ENCODE measurements at regions of chr19 and their contacts with region 1.

Region 1: DNA sequence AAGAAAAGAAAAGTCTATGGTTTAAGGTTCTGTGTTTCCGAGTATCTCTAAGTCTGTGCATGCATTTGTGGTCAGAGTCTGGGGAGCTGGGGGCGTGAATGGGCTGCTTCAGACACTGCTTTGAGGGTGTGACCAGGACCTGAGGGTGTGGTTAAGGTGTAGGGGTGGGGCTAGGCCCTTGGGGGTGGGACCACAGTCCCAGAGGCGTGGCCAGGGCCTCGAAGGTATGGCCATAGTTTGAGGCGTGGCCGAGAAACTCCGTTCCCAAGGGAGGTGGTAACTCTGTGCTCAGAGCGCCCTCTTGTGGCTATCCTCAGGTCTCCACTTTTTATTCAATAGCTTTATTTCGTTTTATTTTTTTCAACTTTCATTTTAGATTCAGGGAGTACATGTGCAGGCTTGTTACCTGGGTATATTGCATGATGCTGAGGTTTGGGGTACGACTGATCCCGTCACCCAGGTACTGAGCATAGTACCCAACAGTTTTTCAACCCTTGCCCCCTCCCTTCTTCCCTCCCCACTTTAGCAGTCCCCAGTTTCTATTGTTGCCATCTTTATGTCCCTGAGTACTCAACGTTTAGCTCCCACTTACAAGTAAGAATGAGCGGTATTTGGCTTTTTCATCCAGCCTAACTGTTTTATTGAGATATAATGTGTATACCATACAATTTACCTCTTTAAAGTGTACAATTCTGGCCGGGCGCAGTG is 7.0 kb upstream of the CBLC start:
- DNase-seq: peak; percentile 88 to 91
- ATAC-seq: peak; percentile 94 to 99 (median 97)
- H3K4me3 ChIP-seq: peak overlapping the region in 1 of 10 donors; percentile 10
- H3K27ac ChIP-seq: peak overlapping the region in 1 of 10 donors; percentile 72
- H3K4me1 ChIP-seq: peaks cover 0 to 41% (median 0%) of the 10 kb centered on the region in 9 donors
- H3K27me3 ChIP-seq: peaks cover 0 to 7% (median 0%) of the 10 kb centered on the region in 7 donors
- CTCF ChIP-seq: peak; percentile 82 to 95 (median 88)

Region 2: DNA sequence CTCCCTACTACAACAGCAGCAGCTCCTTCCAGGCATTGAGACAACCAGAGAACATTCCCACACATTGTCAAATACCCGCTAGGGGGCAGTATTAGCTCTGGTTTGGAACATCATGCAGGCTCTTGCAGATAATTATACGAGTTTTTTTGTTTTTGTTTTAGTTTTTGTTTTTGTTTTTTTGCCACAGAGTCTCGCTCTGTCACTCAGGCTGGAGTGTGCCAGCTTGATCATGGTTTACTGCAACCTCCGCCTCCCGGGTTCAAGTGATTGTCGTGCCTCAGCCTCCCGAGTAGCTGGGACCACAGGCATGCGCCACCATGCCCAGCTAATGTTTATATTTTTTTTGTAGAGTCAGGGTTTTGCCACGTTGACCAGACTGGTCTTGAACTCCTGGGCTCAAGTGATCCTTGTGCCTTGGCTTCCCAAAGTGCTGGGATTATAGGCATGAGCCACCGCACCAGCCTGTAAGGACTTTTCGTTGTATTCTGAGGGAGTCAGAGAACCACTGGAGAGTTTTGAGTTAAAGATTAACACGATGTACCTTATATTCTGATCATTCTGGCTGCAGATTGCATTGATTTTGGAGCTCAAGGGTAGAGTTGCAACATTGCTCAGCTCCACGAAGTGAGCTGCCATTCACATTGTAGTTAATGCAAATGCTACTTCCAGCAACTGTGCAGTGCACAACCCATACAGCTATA is 199.6 kb before region 1 on chr19:
- intact Hi-C with region 1: loop called in 5 of 10 experiments (anchors 5 to 10 kb)
- DNase-seq: peak in 1 of 2 donors; percentile 80
- ATAC-seq: peak in 7 of 8 donors; percentile 55 to 84 (median 78)
- H3K4me3 ChIP-seq: no peak overlapping the region
- H3K27ac ChIP-seq: no peak overlapping the region
- H3K4me1 ChIP-seq: peaks cover 0 to 11% (median 0%) of the 10 kb centered on the region in 9 donors
- H3K27me3 ChIP-seq: peaks cover 0 to 23% (median 0%) of the 10 kb centered on the region in 7 donors
- CTCF ChIP-seq: peak; percentile 51 to 86 (median 83)

Region 3: DNA sequence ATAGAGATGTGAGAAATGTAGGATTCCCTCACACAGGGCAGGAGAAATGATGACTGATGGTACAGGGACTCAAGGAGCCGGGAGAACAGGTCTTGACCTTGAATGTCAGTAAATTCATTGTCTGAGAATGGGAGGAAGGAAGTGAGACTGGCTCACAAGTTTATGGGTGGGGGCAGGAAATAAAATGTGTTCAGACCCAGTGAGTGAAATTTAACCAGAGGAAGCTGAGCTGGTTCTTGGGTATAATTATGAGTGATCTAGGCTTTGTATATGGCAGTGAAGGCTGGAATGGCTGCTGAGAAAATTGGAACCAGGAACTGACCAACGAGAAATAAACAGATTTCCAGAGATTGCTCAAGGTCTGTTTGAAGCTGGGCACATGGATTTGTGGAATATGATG is 163.7 kb before region 1 on chr19:
- intact Hi-C with region 1: no loop called
- DNase-seq: peak in 1 of 2 donors; percentile 50
- ATAC-seq: peak; percentile 71 to 87 (median 86)
- H3K4me3 ChIP-seq: no peak overlapping the region
- H3K27ac ChIP-seq: peak overlapping the region; percentile 20 to 84 (median 64)
- H3K4me1 ChIP-seq: peaks cover 0 to 48% (median 26%) of the 10 kb centered on the region in 9 donors
- H3K27me3 ChIP-seq: peaks cover 0 to 2% (median 0%) of the 10 kb centered on the region in 7 donors
- CTCF ChIP-seq: no peak

Region 4: GRCh38 chr19:44723952-44724319 is 46.8 kb before region 1 on chr19:
- intact Hi-C with region 1: loop called (anchors 1 to 2 kb)
- DNase-seq: peak; percentile 83 to 84
- ATAC-seq: peak; percentile 89 to 94 (median 90)
- H3K4me3 ChIP-seq: no peak overlapping the region
- H3K27ac ChIP-seq: peak overlapping the region in 9 of 10 donors; percentile 0 to 60 (median 28)
- H3K4me1 ChIP-seq: peaks cover 12 to 65% (median 48%) of the 10 kb centered on the region in 9 donors
- H3K27me3 ChIP-seq: no peaks in the 10 kb centered on the region
- CTCF ChIP-seq: peak; percentile 94 to 100 (median 99)

Region 5: DNA sequence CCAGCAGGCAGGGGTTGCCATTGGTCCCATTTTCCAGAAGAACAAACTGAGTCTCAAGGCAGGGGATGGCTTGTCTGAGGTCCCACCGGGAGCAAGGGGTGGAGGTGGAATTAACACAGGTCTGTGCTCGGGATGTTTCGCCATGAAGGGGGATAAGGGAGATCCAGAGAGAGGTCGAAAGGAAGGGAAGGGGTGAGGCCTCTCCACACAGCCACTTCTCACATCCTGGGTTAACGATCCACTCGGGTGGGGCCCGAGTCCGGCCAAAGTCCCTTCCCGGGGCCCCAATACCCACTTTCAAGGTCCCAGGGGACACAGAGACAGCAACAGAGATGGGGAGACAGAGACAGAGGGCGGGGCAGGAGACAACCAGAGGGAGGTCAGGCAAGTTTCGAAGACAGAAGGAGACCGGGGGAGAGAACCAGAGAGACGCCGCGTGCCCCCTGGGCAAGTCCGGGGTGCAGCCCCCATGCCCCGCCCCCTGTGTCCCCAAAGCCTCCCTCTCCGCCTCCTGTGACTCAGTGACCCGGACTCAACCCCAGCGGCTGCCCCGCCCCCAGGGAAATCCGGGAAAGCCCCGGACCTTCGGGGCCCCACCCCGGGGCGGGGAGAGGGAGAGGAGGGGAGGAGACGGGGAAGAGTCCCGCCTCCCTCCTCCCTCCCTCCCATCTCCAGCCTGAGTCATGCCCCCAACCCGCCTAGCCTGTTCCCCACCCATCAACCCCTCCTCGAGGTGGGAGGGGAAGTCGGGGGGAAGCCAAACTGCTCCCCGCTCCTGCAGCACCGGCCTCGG is 23.6 kb before region 1 on chr19:
- intact Hi-C with region 1: no loop called
- DNase-seq: peak; percentile 96
- ATAC-seq: peak; percentile 90 to 96 (median 94)
- H3K4me3 ChIP-seq: peak overlapping the region; percentile 58 to 97 (median 81)
- H3K27ac ChIP-seq: peak overlapping the region; percentile 93 to 100 (median 97)
- H3K4me1 ChIP-seq: peaks cover 20 to 86% (median 74%) of the 10 kb centered on the region in 9 donors
- H3K27me3 ChIP-seq: no peaks in the 10 kb centered on the region
- CTCF ChIP-seq: no peak

Region 6: GRCh38 chr19:44820648-44821609 is 50.2 kb after region 1 on chr19:
- intact Hi-C with region 1: no loop called
- DNase-seq: peak; percentile 80 to 88
- ATAC-seq: peak; percentile 75 to 93 (median 88)
- H3K4me3 ChIP-seq: peak overlapping the region in 7 of 10 donors; percentile 9 to 40 (median 35)
- H3K27ac ChIP-seq: peak overlapping the region; percentile 50 to 92 (median 84)
- H3K4me1 ChIP-seq: peaks cover 0 to 39% (median 22%) of the 10 kb centered on the region in 9 donors
- H3K27me3 ChIP-seq: no peaks in the 10 kb centered on the region
- CTCF ChIP-seq: no peak

Measured in heart right ventricle (tissue), 16 donors.